Activated CD8-positive, alpha-beta T cell treated with anti-CD3 and anti-CD28 coated beads for 36 hours (primary cell): ENCODE measurements at regions of chr2 and their contacts with region 1.

Region 1: GRCh38 chr2:219119422-219120043 is 41.1 kb downstream of the NHEJ1 start:
- DNase-seq: peak; percentile 80
- ATAC-seq: peak; percentile 78
- H3K4me3 Mint-ChIP-seq: no peak overlapping the region
- H3K27ac Mint-ChIP-seq: no peak overlapping the region
- H3K4me1 Mint-ChIP-seq: peaks cover 11% of the 10 kb centered on the region
- H3K27me3 Mint-ChIP-seq: no peaks in the 10 kb centered on the region
- CTCF ChIP-seq: peak; percentile 73

Region 2: GRCh38 chr2:219057709-219058540 is 61.6 kb before region 1 on chr2:
- CTCF ChIA-PET with region 1: interaction called, 431 read pairs
- POLR2A ChIA-PET with region 1: interaction called, 7 read pairs
- intact Hi-C with region 1: loop called (anchors 2 kb)
- DNase-seq: peak; percentile 84
- ATAC-seq: peak; percentile 97
- H3K4me3 Mint-ChIP-seq: peak overlapping the region; percentile 36
- H3K27ac Mint-ChIP-seq: no peak overlapping the region
- H3K4me1 Mint-ChIP-seq: peaks cover 19% of the 10 kb centered on the region
- H3K27me3 Mint-ChIP-seq: peaks cover 60% of the 10 kb centered on the region
- CTCF ChIP-seq: peak; percentile 97

Region 3: DNA sequence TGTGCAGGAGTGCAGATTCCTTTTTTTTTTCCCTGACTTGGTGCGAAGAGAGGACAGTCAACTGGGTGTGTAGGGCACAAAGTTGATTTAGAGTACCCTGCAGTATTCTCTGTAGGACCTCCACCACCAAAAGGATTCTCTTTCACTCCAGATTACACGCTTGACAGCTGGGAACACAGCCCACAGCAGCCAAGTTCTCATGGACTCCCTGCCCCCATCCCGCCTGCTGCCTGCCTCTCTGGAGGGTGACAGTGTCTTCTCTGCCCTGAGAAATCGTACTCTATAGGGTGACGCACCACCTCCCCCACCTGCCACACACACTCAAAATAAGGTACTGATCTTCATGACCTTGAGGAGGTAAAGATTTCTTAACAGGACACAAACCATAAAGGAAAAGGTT is 32.2 kb before region 1 on chr2:
- CTCF ChIA-PET with region 1: interaction called, 13 read pairs
- POLR2A ChIA-PET with region 1: interaction called, 3 read pairs
- intact Hi-C with region 1: no loop called
- DNase-seq: no peak
- ATAC-seq: no peak
- H3K4me3 Mint-ChIP-seq: no peak overlapping the region
- H3K27ac Mint-ChIP-seq: no peak overlapping the region
- H3K4me1 Mint-ChIP-seq: peaks cover 14% of the 10 kb centered on the region
- H3K27me3 Mint-ChIP-seq: no peaks in the 10 kb centered on the region
- CTCF ChIP-seq: no peak

Region 4: DNA sequence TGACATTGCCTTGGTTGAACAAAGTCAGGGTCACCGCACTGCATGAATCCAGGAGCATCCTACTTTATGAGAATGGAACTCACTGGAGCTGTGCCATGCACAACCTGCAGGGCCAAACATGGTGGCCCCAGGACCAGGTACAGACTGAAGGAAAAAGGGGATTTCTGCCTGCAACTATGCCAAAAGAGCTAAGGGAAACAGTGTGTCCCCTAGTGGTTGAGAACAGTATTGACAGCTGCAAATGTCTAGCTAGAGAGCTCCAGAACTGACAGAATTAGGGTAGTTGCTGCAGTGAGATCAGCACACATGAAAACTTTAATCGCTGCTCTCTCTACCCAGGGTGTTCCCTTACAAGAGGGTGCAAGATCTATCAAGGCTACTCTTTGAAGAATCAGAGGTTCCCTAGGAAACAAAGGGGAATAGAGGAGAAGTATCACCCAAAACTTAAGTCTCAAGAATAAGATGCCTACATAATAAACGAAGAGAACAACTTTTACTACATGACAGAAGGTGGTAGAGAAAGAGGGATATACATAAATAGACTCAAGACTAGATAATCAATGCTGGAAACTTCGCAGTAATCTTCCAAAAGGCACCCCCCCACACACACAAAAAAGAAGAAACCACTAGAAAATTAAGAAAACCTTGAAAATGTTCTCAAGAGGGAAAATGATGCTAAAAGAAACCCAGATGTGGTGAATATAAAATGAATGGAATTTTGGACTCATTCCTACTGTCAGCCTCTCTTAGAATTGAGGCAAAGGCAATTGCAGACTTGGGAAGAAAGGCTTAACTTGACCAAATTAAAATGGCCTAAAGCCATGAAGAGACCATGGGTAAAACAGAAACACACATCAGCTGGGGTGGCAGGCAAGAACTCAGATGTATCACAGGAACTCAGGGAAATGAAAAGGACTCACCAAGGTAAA is 15.2 kb before region 1 on chr2:
- CTCF ChIA-PET with region 1: interaction called, 71 read pairs
- POLR2A ChIA-PET with region 1: no interaction called
- intact Hi-C with region 1: no loop called
- DNase-seq: peak; percentile 30
- ATAC-seq: peak; percentile 90
- H3K4me3 Mint-ChIP-seq: no peak overlapping the region
- H3K27ac Mint-ChIP-seq: peak overlapping the region; percentile 28
- H3K4me1 Mint-ChIP-seq: peaks cover 32% of the 10 kb centered on the region
- H3K27me3 Mint-ChIP-seq: no peaks in the 10 kb centered on the region
- CTCF ChIP-seq: peak; percentile 82

Region 5: DNA sequence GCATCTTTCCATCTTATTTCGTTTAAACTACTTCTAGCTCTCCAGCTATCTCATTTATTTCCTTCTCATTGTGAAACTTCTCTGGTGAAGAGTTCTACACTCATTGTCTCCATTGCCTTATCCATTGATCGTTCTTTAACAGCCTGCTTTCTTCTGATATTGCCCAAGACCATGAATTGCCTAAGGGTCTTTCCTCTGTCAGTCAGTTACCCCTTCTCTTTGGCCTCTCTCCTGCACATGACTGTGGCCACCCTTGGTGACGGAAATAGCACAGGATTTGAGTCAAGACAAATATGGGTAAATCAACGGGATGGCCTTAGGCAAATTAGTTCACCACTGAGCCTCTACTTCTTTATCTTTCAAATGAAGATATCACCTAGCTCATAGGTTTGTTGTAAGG is 14.4 kb after region 1 on chr2:
- CTCF ChIA-PET with region 1: interaction called, 55 read pairs
- POLR2A ChIA-PET with region 1: interaction called, 3 read pairs
- intact Hi-C with region 1: no loop called
- DNase-seq: no peak
- ATAC-seq: no peak
- H3K4me3 Mint-ChIP-seq: no peak overlapping the region
- H3K27ac Mint-ChIP-seq: no peak overlapping the region
- H3K4me1 Mint-ChIP-seq: peaks cover 10% of the 10 kb centered on the region
- H3K27me3 Mint-ChIP-seq: no peaks in the 10 kb centered on the region
- CTCF ChIP-seq: no peak

Region 6: DNA sequence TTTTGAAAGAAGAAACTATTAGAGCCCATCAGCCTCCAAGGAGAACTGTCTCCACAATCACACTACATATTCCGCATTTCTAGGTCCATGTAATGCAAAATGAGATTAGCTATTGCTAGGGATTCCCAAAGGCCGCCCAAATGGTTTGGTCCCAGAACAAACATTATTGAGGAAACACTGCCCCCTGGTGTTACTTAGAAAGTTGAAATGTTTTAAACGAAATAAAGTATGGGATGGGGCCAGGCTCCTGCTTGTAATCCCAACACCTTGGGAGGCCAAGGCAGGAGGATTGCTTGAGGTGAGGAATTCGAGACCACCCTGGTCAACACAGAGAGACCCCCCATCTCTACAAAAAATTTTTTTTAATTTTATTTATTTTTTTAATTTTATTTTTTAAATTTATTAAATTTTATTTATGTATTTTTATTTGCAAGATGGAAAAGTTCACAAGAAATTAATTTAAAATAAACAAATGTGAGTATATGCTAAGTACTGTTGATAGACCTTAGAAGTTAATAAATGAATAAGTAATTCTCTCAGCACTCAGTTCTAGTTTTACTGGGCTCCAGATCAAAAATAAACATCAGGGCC is 35.6 kb after region 1 on chr2:
- CTCF ChIA-PET with region 1: interaction called, 15 read pairs
- POLR2A ChIA-PET with region 1: no interaction called
- intact Hi-C with region 1: no loop called
- DNase-seq: peak; percentile 36
- ATAC-seq: peak; percentile 37
- H3K4me3 Mint-ChIP-seq: no peak overlapping the region
- H3K27ac Mint-ChIP-seq: no peak overlapping the region
- H3K4me1 Mint-ChIP-seq: peaks cover 9% of the 10 kb centered on the region
- H3K27me3 Mint-ChIP-seq: no peaks in the 10 kb centered on the region
- CTCF ChIP-seq: peak; percentile 81

Region 7: GRCh38 chr2:219218732-219219701 is 99.5 kb after region 1 on chr2 and contains the start of gene ABCB6:
- CTCF ChIA-PET with region 1: no interaction called
- POLR2A ChIA-PET with region 1: no interaction called
- intact Hi-C with region 1: no loop called
- DNase-seq: peak; percentile 95
- ATAC-seq: peak; percentile 92
- H3K4me3 Mint-ChIP-seq: peak within 1 kb of the TSS; percentile 88
- H3K27ac Mint-ChIP-seq: peak within 1 kb of the TSS; percentile 77
- H3K4me1 Mint-ChIP-seq: peaks cover 25% of the 10 kb centered on the region
- H3K27me3 Mint-ChIP-seq: no peaks in the 10 kb centered on the region
- CTCF ChIP-seq: no peak
- total RNA-seq, gene ABCB6: 32.3 to 35.7 TPM